ENCODE measurements at regions of chr12 and their contacts with region 1.

Region 1: GRCh38 chr12:8108808-8109398 is 14.5 kb upstream of the CLEC4A start:
- DNase-seq: peak; percentile 70
- CTCF ChIP-seq: peak; percentile 98

Region 2: GRCh38 chr12:8096281-8096915 is 12.5 kb before region 1 on chr12:
- CTCF ChIA-PET with region 1: interaction called, 13 read pairs
- POLR2A ChIA-PET with region 1: no interaction called
- DNase-seq: no peak
- CTCF ChIP-seq: no peak

Region 3: DNA sequence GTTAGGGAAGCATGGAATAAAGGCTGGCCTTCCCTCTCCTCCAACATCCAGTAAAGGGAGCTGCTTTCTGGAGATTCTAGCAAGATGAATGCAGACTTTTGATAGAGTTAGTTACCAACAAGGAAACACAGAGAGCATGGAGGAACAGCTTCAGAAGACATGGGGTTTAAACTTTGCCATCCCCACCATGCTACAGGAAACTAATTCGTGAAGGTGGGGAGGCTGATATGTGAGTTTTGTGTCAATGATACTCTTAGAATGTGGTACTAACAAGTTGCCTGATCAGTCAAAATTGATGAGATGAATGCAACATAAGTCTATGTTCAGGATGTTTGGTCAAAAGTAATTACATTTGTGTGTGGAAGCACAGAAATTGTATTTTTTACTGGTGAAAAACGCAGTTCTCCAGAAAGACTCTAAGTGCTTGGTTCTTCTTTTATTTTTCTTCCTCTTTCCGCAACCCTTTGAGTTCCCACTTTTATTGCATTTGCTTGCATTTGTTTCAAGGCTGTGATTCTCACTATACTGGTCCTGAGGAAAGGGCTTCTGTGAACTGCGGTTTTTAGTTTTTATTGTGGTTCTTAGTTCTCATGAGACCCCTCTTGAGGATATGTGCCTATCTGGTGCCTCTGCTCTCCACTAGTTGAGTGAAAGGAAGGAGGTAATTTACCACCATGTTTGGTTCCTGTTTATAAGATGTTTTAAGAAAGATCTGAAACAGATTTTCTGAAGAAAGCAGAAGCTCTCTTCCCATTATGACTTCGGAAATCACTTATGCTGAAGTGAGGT is 14.4 kb after region 1 on chr12 and contains the start of gene CLEC4A:
- CTCF ChIA-PET with region 1: interaction called, 14 read pairs
- POLR2A ChIA-PET with region 1: no interaction called
- DNase-seq: peak; percentile 29
- CTCF ChIP-seq: no peak

Region 4: GRCh38 chr12:8226355-8226754 is 117.5 kb after region 1 on chr12:
- CTCF ChIA-PET with region 1: interaction called, 29 read pairs
- POLR2A ChIA-PET with region 1: no interaction called
- DNase-seq: no peak
- CTCF ChIP-seq: no peak